Mammary epithelial cell (primary cell): ENCODE measurements at regions of chr12 and their contacts with region 1.

Region 1: GRCh38 chr12:55966408-55967281 is at the start of gene CDK2:
- DNase-seq: peak; percentile 78
- H3K4me3 ChIP-seq: peak within 1 kb of the TSS; percentile 86 to 96 (median 91)
- H3K27ac ChIP-seq: peak within 1 kb of the TSS; percentile 87
- H3K4me1 ChIP-seq: peaks cover 26% of the 10 kb centered on the region
- H3K27me3 ChIP-seq: no peaks in the 10 kb centered on the region
- CTCF ChIP-seq: no peak
- total RNA-seq, gene CDK2: 17.5 to 54.9 TPM

Region 2: GRCh38 chr12:56007564-56008559 is 41.2 kb after region 1 on chr12:
- CTCF ChIA-PET with region 1: interaction called, 12 read pairs
- dilution Hi-C with region 1: no loop called
- in situ Hi-C with region 1: no loop called
- intact Hi-C with region 1: no loop called
- DNase-seq: peak; percentile 7
- H3K4me3 ChIP-seq: peak overlapping the region; percentile 54 to 78 (median 60)
- H3K27ac ChIP-seq: peak overlapping the region; percentile 18
- H3K4me1 ChIP-seq: peaks cover 6% of the 10 kb centered on the region
- H3K27me3 ChIP-seq: no peaks in the 10 kb centered on the region
- CTCF ChIP-seq: no peak

Region 3: GRCh38 chr12:56286044-56286830 is 319.6 kb after region 1 on chr12:
- CTCF ChIA-PET with region 1: no interaction called
- dilution Hi-C with region 1: no loop called
- in situ Hi-C with region 1: no loop called
- intact Hi-C with region 1: no loop called
- DNase-seq: no peak
- H3K4me3 ChIP-seq: no peak overlapping the region
- H3K27ac ChIP-seq: no peak overlapping the region
- H3K4me1 ChIP-seq: peaks cover 6% of the 10 kb centered on the region
- H3K27me3 ChIP-seq: no peaks in the 10 kb centered on the region
- CTCF ChIP-seq: no peak